A673 (cell line): ENCODE measurements at regions of chr13 and their contacts with region 1.

Region 1: DNA sequence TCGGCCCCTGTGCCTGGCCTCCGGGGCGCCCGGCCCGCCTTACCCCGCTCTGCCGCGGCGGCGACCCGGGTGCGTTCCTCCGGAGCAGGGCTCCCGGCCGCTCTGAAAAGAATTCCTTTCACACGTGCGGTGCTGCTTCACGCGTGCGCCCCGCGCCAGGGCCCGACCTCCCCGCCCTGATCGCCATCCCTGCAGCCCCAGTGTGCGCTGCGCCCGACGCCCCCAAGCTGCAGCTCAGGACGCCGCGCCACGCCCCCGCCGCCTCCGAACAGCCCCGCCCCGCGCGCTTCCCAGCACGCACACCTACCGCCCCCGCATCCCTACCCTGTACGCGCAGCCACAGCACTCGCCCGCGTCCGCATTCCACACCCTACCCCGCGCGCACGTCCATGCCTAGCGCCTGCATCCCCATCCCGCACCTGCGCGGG is at the start of gene GJA3:
- DNase-seq: peak; percentile 56
- H3K4me3 ChIP-seq: peak within 1 kb of the TSS; percentile 54
- H3K27ac ChIP-seq: no peak within 1 kb of the TSS
- H3K4me1 ChIP-seq: peaks cover 29% of the 10 kb centered on the region
- H3K27me3 ChIP-seq: peaks cover 37% of the 10 kb centered on the region
- CTCF ChIP-seq: no peak
- total RNA-seq, gene GJA3: 0.43 and 0.48 TPM in 2 replicates

Region 2: DNA sequence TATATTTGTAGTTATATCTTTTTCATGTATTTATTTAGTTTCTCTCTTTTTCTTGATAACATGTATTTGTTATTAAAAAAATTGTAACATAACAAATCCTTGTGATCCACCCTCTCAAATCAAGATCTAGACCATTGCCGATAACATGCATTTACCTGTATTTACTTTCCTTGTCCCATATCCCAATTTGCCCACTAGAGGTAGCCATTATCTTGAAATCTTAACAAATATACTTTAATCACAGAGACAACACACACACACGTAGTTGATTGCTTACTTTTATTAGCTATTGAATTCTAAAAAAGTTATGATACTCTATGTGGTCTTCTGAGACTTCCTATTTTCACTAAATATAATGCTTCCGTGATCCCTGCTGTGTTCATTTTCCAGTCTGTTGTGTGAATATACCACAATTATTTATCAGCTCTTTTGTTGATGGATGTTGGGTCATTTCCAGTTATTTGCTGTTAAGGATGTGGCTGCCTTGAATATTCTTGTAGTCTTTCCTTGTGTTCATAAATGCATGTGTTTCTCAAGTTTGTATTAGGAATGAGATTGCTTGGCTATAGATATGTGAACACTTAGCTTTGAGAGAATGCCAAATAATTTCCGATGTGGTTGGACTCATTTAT is 233.6 kb before region 1 on chr13:
- CTCF ChIA-PET with region 1: interaction called, 6 read pairs
- POLR2A ChIA-PET with region 1: no interaction called
- intact Hi-C with region 1: loop called (anchors 10 kb)
- DNase-seq: peak; percentile 32
- H3K4me3 ChIP-seq: no peak overlapping the region
- H3K27ac ChIP-seq: no peak overlapping the region
- H3K4me1 ChIP-seq: peaks cover 6% of the 10 kb centered on the region
- H3K27me3 ChIP-seq: no peaks in the 10 kb centered on the region
- CTCF ChIP-seq: peak; percentile 67

Region 3: DNA sequence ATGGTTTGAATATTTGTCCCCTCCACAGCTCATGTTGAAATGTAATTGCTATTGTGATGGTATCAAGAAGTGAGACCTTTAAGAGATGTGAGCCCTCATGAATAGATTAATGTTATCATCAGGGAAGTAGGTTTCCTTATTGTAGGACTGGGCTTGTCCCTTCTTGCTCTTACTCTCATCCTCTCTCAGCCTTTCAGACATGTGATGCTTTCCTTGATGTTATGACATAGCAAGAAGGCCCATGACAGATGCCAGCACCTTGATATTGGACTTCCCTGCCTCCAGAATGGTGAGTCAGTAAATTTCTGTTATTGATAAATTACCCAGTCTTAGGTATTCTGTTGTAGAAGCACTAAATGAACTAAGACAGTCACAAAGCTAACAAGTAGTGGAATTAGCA is 208.0 kb before region 1 on chr13:
- CTCF ChIA-PET with region 1: no interaction called
- POLR2A ChIA-PET with region 1: no interaction called
- intact Hi-C with region 1: no loop called
- DNase-seq: no peak
- H3K4me3 ChIP-seq: no peak overlapping the region
- H3K27ac ChIP-seq: no peak overlapping the region
- H3K4me1 ChIP-seq: no peaks in the 10 kb centered on the region
- H3K27me3 ChIP-seq: no peaks in the 10 kb centered on the region
- CTCF ChIP-seq: no peak

Region 4: GRCh38 chr13:19984430-19985218 is 176.2 kb before region 1 on chr13:
- CTCF ChIA-PET with region 1: interaction called, 4 read pairs
- POLR2A ChIA-PET with region 1: no interaction called
- intact Hi-C with region 1: loop called (anchors 5 kb)
- DNase-seq: peak; percentile 54
- H3K4me3 ChIP-seq: no peak overlapping the region
- H3K27ac ChIP-seq: no peak overlapping the region
- H3K4me1 ChIP-seq: no peaks in the 10 kb centered on the region
- H3K27me3 ChIP-seq: no peaks in the 10 kb centered on the region
- CTCF ChIP-seq: peak; percentile 71

Region 5: DNA sequence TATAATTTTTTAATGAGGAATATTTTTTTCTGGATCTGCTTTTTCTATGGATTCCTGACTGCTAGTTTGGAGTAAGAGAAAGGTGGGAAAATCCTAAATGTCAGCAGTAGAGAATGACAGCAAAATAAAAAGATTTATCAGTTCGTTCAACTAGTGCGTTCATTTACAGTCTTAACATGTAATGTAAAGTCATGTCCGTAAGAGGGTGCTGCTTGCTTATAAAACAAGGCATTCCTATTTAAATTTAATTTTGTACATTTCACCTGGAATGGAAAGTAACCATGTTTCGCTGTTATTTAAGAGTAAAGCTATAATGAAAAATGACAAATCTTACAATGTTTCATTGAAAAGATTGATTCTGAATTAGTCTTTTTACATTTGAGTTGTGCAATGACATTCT is 125.7 kb before region 1 on chr13:
- CTCF ChIA-PET with region 1: no interaction called
- POLR2A ChIA-PET with region 1: no interaction called
- intact Hi-C with region 1: loop called (anchors 5 kb)
- DNase-seq: peak; percentile 14
- H3K4me3 ChIP-seq: no peak overlapping the region
- H3K27ac ChIP-seq: no peak overlapping the region
- H3K4me1 ChIP-seq: no peaks in the 10 kb centered on the region
- H3K27me3 ChIP-seq: no peaks in the 10 kb centered on the region
- CTCF ChIP-seq: peak; percentile 50

Region 6: GRCh38 chr13:20057963-20058362 is 102.9 kb before region 1 on chr13:
- CTCF ChIA-PET with region 1: no interaction called
- POLR2A ChIA-PET with region 1: no interaction called
- intact Hi-C with region 1: loop called (anchors 2 kb)
- DNase-seq: no peak
- H3K4me3 ChIP-seq: no peak overlapping the region
- H3K27ac ChIP-seq: no peak overlapping the region
- H3K4me1 ChIP-seq: no peaks in the 10 kb centered on the region
- H3K27me3 ChIP-seq: no peaks in the 10 kb centered on the region
- CTCF ChIP-seq: 0 out of 2 replicates have a peak, but pooled peaks have one; percentile 25

Region 7: DNA sequence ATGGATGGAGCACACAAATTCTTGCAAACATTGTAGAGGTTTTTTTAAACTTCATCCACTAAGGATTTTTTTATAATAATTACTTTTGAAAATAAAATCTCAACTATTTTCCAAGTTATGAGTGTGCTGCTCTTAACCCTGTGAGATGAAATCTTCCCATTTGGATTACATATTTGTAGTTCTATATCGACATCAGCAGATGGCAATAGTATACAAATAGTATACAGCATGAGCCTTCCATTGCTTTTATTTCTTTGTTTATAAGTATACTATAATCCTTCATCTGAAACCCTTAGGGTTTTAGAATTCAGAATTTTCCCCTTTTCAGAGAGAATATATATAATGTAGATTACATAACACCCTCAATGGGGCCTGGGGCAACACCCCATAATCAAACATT is 70.5 kb before region 1 on chr13:
- CTCF ChIA-PET with region 1: interaction called, 3 read pairs
- POLR2A ChIA-PET with region 1: no interaction called
- intact Hi-C with region 1: loop called (anchors 5 kb)
- DNase-seq: peak; percentile 9
- H3K4me3 ChIP-seq: no peak overlapping the region
- H3K27ac ChIP-seq: no peak overlapping the region
- H3K4me1 ChIP-seq: no peaks in the 10 kb centered on the region
- H3K27me3 ChIP-seq: no peaks in the 10 kb centered on the region
- CTCF ChIP-seq: peak; percentile 44; the same call in 1 of the 2 replicates

Region 8: GRCh38 chr13:20127577-20128466 is 33.0 kb before region 1 on chr13:
- CTCF ChIA-PET with region 1: interaction called, 3 read pairs
- POLR2A ChIA-PET with region 1: no interaction called
- intact Hi-C with region 1: loop called (anchors 5 kb)
- DNase-seq: peak; percentile 48
- H3K4me3 ChIP-seq: peak overlapping the region; percentile 63
- H3K27ac ChIP-seq: peak overlapping the region; percentile 23
- H3K4me1 ChIP-seq: peaks cover 7% of the 10 kb centered on the region
- H3K27me3 ChIP-seq: peaks cover 9% of the 10 kb centered on the region
- CTCF ChIP-seq: peak; percentile 68

Region 9: DNA sequence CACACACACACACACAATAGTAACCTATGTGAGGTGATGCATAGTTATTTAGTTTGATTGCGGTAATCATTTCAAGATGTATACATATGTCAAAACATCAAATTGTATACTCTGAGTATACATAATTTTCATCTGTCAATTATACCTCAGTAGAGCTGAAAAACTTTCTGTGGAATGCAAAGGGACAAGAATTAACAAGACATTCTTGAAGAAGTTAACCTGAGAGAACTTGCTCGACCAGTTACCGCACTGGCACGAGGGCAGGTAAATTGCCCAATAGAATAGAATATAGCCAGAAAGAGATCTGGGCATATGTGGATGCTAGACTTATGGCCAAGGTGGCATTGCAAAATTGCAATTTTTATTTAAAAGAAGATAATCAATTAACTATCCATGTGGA is 113.6 kb after region 1 on chr13:
- CTCF ChIA-PET with region 1: no interaction called
- POLR2A ChIA-PET with region 1: no interaction called
- intact Hi-C with region 1: no loop called
- DNase-seq: no peak
- H3K4me3 ChIP-seq: no peak overlapping the region
- H3K27ac ChIP-seq: no peak overlapping the region
- H3K4me1 ChIP-seq: no peaks in the 10 kb centered on the region
- H3K27me3 ChIP-seq: peaks cover 4% of the 10 kb centered on the region
- CTCF ChIP-seq: no peak